ENCODE measurements at regions of chr19 and their contacts with region 1.

Region 1: GRCh38 chr19:13060964-13061927 is 41.4 kb downstream of the LYL1 start:
- DNase-seq: peak; percentile 81
- H3K27ac ChIP-seq: peak overlapping the region; percentile 100
- CTCF ChIP-seq: peak; percentile 95

Region 2: DNA sequence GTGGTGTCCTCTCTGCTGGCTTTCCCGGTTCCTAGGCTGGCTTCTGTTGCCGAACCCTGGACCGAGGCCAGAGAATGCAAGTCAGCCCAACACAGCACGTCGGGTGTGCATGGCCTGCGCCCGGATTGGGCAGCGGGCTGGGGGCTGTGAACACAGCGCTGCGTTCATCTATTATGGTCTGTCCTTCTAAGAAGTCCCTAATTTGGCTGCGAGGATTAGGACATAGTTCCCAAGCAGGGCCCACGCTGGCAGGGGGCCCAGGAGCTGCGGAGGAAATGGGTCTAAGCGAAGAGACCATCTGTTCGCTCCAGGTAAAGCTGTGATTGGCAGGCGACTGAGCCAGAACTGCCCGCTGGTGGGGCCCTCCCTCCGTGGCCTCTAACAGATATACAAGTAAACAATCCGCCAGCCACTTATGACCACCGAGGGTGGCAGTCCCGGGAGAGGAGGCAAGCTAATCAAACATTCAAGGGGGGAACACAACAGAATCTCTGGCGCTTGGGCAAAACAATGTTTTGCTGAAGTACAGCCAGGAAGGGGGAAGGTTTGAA is 148.2 kb before region 1 on chr19:
- CTCF ChIA-PET with region 1: no interaction called
- POLR2A ChIA-PET with region 1: no interaction called
- DNase-seq: no peak
- H3K27ac ChIP-seq: no peak overlapping the region
- CTCF ChIP-seq: no peak

Region 3: DNA sequence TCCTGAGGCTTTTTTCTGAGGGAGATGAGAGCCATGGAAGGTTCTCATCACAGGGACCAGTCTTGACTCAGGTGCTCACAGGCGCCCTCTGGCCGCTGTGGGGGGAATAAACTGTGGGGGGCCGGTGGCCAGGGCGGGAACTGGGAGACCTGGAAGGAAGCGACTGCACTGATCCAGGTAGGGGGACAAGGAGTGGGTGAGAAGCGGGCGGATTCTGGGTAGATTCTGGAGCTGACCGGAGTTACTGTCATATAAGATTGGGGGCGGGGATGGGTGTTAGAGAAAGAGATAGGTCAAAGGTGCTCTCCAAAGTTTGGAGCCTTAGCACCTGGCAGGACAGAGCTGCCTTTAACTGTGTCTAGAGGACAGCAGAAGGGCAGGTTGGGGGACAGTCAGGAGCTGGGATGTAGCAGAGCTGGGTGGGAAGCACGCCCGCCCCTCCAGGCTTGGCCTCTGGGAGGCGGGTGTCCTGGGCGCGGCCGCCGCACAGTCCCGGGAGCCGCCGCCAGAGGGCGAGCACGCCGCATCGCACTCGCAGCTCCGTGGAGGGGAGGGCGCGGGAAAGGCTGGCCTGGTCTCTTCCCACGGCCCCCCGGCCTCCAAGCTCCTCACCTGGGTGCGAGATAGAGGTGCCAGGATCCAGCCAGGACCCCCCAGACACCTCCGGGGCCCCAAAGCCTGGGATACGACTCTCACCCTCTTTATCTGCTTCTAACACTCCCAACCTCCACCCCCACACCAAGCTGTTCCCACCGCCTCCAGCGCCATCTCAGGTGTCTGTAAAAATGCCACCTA is 96.0 kb before region 1 on chr19:
- CTCF ChIA-PET with region 1: interaction called, 17 read pairs
- POLR2A ChIA-PET with region 1: no interaction called
- DNase-seq: peak; percentile 74
- H3K27ac ChIP-seq: peak overlapping the region; percentile 77
- CTCF ChIP-seq: peak; percentile 98

Region 4: GRCh38 chr19:12974301-12975220 is 86.7 kb before region 1 on chr19:
- CTCF ChIA-PET with region 1: interaction called, 31 read pairs
- POLR2A ChIA-PET with region 1: no interaction called
- DNase-seq: no peak
- H3K27ac ChIP-seq: 0 out of 2 replicates have a peak overlapping the region, but pooled peaks have one; percentile 24
- CTCF ChIP-seq: no peak

Region 5: GRCh38 chr19:12983542-12984142 is 77.6 kb before region 1 on chr19:
- CTCF ChIA-PET with region 1: interaction called, 22 read pairs
- POLR2A ChIA-PET with region 1: no interaction called
- DNase-seq: peak; percentile 81
- H3K27ac ChIP-seq: peak overlapping the region; percentile 30
- CTCF ChIP-seq: peak; percentile 96

Region 6: DNA sequence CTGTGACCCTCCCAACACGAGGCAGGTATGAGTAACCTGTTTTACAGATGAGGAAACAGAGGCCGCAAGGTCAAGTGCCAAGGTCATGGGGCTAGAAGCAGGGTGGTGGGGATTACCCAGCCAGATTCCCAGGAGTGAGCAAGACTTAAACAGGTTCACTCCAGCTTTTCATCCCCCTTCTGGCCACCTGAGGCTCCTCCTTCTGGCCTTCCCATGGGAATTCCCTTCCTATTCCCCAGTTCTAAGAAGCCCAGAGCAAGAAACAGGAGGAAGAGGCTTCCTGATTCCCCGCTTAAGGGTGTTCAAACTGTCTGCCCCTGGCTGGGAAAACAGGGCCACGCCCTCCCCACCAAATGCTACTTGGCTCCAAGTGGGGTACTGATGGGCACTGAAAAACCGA is 51.9 kb before region 1 on chr19:
- CTCF ChIA-PET with region 1: interaction called, 9 read pairs
- POLR2A ChIA-PET with region 1: interaction called, 10 read pairs
- DNase-seq: no peak
- H3K27ac ChIP-seq: peak overlapping the region; percentile 98
- CTCF ChIP-seq: no peak

Region 7: GRCh38 chr19:13026462-13027370 is 34.5 kb before region 1 on chr19:
- CTCF ChIA-PET with region 1: interaction called, 14 read pairs
- POLR2A ChIA-PET with region 1: interaction called, 4 read pairs
- DNase-seq: no peak
- H3K27ac ChIP-seq: peak overlapping the region; percentile 99
- CTCF ChIP-seq: no peak

Region 8: DNA sequence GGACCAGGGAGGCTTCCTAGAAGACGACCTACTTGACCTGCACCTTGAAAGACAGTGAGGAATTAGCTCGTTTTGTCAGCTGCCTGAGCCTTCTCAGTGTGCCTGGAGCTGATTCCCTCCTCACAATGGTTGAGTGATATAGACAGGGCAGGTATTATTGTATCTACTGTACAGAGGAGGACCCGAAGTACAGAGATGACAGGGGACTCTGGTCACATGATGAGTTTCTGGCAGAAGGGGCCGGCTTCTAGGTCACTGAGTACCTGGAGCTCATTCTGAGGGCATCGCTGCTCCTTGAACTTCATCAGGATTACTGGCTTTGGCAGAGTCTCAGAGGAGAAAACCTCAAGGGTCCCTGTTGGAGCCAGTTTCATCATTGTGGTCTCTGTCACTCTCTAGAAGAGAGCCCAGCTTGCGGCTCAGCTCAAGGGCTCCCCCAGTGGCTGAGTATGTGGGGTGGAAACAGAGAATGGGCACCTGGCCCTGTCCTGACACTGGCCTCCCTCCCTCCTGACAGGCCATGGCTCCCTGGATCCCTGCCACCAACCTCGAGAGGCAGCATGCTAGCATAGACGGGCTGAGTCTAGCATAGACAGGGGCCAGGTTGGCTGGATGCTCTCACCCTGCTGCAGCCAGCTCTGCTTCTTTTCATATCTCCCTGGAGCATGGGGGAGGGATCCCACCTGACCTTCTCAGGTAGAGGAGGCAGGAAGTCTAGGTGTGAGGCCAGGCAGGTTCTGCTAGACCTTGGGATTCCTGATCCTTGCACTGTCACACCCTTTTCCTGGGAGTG is 27.2 kb before region 1 on chr19:
- CTCF ChIA-PET with region 1: interaction called, 17 read pairs
- POLR2A ChIA-PET with region 1: no interaction called
- DNase-seq: peak; percentile 73
- H3K27ac ChIP-seq: peak overlapping the region; percentile 77
- CTCF ChIP-seq: peak; percentile 82

Measured in RWPE1 (cell line).